Activated naive CD4-positive, alpha-beta T cell treated with anti-CD3 and anti-CD28 coated beads for 36 hours (primary cell): ENCODE measurements at regions of chr4 and their contacts with region 1.

Region 1: GRCh38 chr4:118270492-118270891 is 82.3 kb downstream of the PRSS12 start:
- DNase-seq: no peak
- H3K4me3 Mint-ChIP-seq: no peak overlapping the region
- H3K27ac Mint-ChIP-seq: no peak overlapping the region
- H3K4me1 Mint-ChIP-seq: no peaks in the 10 kb centered on the region
- H3K27me3 Mint-ChIP-seq: peaks cover 2% of the 10 kb centered on the region

Region 2: GRCh38 chr4:116358588-116359222 is 1911.8 kb before region 1 on chr4:
- CTCF ChIA-PET with region 1: no interaction called
- intact Hi-C with region 1: loop called (anchors 2 kb)
- DNase-seq: peak; percentile 53
- H3K4me3 Mint-ChIP-seq: no peak overlapping the region
- H3K27ac Mint-ChIP-seq: no peak overlapping the region
- H3K4me1 Mint-ChIP-seq: no peaks in the 10 kb centered on the region
- H3K27me3 Mint-ChIP-seq: no peaks in the 10 kb centered on the region

Region 3: DNA sequence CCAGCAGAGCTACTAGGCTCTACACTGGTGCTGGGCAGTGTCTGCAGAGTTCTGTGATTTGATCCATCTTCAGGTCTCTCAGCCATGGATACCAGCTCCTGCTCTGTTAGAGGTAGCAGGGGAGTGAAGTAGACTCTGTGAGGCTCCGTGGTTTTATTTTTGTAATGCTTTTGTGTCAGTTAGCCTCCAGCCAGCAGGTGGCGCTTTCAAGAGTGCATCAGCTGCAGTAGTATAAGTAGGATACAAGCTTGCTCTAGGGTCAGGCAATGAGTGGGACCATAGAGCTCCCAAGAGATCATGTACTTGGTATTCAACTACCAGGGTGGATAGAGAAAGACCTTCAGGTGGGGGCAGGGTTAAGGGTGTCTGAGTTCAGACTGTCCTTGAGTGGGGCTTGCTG is 822.6 kb before region 1 on chr4:
- CTCF ChIA-PET with region 1: interaction called, 4 read pairs
- intact Hi-C with region 1: loop called (anchors 1 kb)
- DNase-seq: peak; percentile 31
- H3K4me3 Mint-ChIP-seq: no peak overlapping the region
- H3K27ac Mint-ChIP-seq: no peak overlapping the region
- H3K4me1 Mint-ChIP-seq: no peaks in the 10 kb centered on the region
- H3K27me3 Mint-ChIP-seq: peaks cover 2% of the 10 kb centered on the region

Region 4: DNA sequence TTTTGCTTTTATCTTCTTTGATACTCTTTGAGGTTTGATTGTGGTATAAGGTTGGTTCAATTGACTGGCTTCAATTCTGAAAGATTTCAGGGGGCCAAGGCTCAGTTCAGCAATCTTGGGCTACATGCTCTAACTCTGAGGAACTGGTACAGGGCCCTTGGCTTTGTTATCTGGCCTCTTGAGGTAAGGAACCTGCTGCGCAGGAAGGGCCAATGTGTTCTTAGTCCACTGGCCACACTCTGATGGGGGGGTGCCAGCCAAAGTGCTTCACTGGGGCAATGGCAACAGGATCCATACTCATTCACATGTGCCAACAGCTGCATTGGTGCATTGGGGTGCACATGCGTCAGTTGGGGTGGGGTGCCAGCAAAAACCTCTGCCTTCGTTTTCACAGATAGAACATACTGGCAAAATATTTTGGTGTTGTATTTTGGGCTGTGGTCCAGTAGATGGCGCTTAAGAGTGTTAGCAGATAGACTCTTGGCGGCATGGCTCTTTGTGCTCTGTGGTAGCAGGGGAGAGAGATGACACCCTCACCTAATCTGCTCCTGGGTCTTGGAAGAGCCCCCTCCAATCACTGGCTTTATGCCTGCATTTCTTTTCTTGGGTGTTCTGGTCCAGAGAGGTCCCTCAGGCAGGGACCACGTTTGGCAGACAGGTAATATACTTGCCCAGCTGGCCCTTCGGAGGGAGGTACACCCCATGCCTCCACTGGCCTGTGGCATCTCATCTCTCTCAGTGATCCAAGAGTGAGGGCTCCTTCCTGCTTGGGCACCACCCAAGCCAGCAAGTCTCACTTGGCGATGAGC is 193.3 kb before region 1 on chr4:
- CTCF ChIA-PET with region 1: interaction called, 3 read pairs
- intact Hi-C with region 1: loop called (anchors 1 kb)
- DNase-seq: peak; percentile 16
- H3K4me3 Mint-ChIP-seq: no peak overlapping the region
- H3K27ac Mint-ChIP-seq: no peak overlapping the region
- H3K4me1 Mint-ChIP-seq: no peaks in the 10 kb centered on the region
- H3K27me3 Mint-ChIP-seq: peaks cover 7% of the 10 kb centered on the region

Region 5: DNA sequence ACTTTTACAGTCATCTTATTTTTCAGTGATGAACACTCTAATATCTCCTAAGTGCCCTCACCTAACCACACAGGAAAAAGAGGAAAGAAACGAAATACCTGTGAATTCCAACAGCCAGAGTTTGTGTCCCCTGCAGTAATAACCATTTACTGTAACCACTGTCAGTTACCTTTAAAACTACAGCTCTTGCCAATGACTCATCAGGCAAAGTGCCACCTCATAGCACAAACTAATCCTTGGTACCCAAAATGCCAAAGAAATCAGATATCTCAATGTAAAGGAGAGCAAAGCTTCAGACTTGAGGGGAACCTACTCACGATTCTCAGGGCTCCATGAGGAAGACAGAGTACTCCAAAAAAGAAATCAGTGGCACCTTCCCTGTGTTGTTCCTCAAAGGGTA is 89.7 kb before region 1 on chr4:
- CTCF ChIA-PET with region 1: no interaction called
- intact Hi-C with region 1: no loop called
- DNase-seq: no peak
- H3K4me3 Mint-ChIP-seq: no peak overlapping the region
- H3K27ac Mint-ChIP-seq: no peak overlapping the region
- H3K4me1 Mint-ChIP-seq: no peaks in the 10 kb centered on the region
- H3K27me3 Mint-ChIP-seq: peaks cover 5% of the 10 kb centered on the region

Region 6: DNA sequence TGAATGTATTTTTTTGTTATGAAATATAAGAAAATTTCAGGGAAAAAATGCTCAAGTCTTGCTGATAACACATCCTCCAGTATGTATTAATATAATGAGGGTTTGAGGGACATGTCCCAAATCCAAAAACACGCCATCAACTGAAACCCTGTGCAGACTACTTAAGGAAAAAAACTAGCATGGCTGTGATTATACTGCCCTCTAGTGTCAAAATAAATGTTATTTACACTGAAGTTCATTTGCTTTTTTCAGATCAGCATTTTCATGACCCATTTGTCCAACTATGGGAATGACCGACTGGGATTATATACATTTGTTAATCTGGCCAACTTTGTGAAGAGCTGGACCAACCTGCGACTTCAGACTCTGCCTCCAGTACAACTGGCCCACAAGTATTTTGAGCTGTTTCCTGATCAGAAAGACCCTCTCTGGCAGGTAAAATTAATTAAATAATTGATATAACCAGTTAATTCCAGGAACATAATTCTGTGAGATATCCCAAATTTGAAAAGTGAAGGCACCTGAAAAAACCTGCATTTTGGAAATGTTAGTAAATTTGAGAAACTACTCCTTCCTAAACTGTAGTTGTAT is 46.2 kb before region 1 on chr4:
- CTCF ChIA-PET with region 1: interaction called, 6 read pairs
- intact Hi-C with region 1: loop called (anchors 2 kb)
- DNase-seq: no peak
- H3K4me3 Mint-ChIP-seq: no peak overlapping the region
- H3K27ac Mint-ChIP-seq: no peak overlapping the region
- H3K4me1 Mint-ChIP-seq: no peaks in the 10 kb centered on the region
- H3K27me3 Mint-ChIP-seq: peaks cover 3% of the 10 kb centered on the region

Region 7: GRCh38 chr4:118260309-118260708 is 10.2 kb before region 1 on chr4:
- CTCF ChIA-PET with region 1: interaction called, 12 read pairs
- intact Hi-C with region 1: no loop called
- DNase-seq: no peak
- H3K4me3 Mint-ChIP-seq: no peak overlapping the region
- H3K27ac Mint-ChIP-seq: no peak overlapping the region
- H3K4me1 Mint-ChIP-seq: no peaks in the 10 kb centered on the region
- H3K27me3 Mint-ChIP-seq: peaks cover 7% of the 10 kb centered on the region